ENCODE measurements at regions of chr1 and their contacts with region 1.

Region 1: GRCh38 chr1:42576935-42577334 is 81.3 kb upstream of the PPIH start:
- DNase-seq: no peak
- ATAC-seq: no peak
- H3K4me3 ChIP-seq: no peak overlapping the region
- H3K4me3 Mint-ChIP-seq: no peak overlapping the region
- H3K27ac ChIP-seq: no peak overlapping the region
- H3K27ac Mint-ChIP-seq: no peak overlapping the region
- H3K4me1 ChIP-seq: no peaks in the 10 kb centered on the region
- H3K4me1 Mint-ChIP-seq: no peaks in the 10 kb centered on the region
- H3K27me3 ChIP-seq: no peaks in the 10 kb centered on the region
- H3K27me3 Mint-ChIP-seq: no peaks in the 10 kb centered on the region
- CTCF ChIP-seq: no peak

Region 2: DNA sequence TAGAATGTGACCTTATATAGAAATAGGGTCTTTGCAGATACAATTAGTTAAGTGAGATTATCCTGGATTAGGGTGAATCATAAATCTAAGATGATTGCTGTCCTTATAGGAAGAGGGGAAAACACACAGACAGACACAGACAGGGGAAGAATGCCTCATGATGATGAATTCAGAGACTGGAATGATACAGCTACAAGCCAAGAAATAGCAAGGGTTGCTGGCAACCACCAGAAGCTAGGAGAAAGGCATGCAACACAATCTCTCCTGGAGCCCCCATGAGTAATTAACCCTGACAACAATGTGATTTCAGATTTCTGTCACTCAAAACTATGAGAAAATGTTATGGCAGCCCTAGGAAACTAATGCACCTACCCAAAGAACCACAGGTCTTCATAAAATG is 62.2 kb after region 1 on chr1:
- CTCF ChIA-PET with region 1: no interaction called
- POLR2A ChIA-PET with region 1: no interaction called
- intact Hi-C with region 1: no loop called
- DNase-seq: no peak
- ATAC-seq: no peak
- H3K4me3 ChIP-seq: no peak overlapping the region
- H3K4me3 Mint-ChIP-seq: no peak overlapping the region
- H3K27ac ChIP-seq: no peak overlapping the region
- H3K27ac Mint-ChIP-seq: no peak overlapping the region
- H3K4me1 ChIP-seq: no peaks in the 10 kb centered on the region
- H3K4me1 Mint-ChIP-seq: no peaks in the 10 kb centered on the region
- H3K27me3 ChIP-seq: no peaks in the 10 kb centered on the region
- H3K27me3 Mint-ChIP-seq: no peaks in the 10 kb centered on the region
- CTCF ChIP-seq: no peak

Region 3: GRCh38 chr1:42690477-42691156 is 113.7 kb after region 1 on chr1:
- CTCF ChIA-PET with region 1: interaction called, 3 read pairs
- POLR2A ChIA-PET with region 1: no interaction called
- intact Hi-C with region 1: loop called (anchors 2 kb)
- DNase-seq: no peak
- ATAC-seq: no peak
- H3K4me3 ChIP-seq: no peak overlapping the region
- H3K4me3 Mint-ChIP-seq: peak overlapping the region; percentile 4
- H3K27ac ChIP-seq: no peak overlapping the region
- H3K27ac Mint-ChIP-seq: no peak overlapping the region
- H3K4me1 ChIP-seq: peaks cover 59% of the 10 kb centered on the region in 2 donors
- H3K4me1 Mint-ChIP-seq: peaks cover 76% of the 10 kb centered on the region
- H3K27me3 ChIP-seq: no peaks in the 10 kb centered on the region
- H3K27me3 Mint-ChIP-seq: no peaks in the 10 kb centered on the region
- CTCF ChIP-seq: peak; percentile 33

Region 4: GRCh38 chr1:42747125-42747524 is 170.2 kb after region 1 on chr1:
- CTCF ChIA-PET with region 1: interaction called, 57 read pairs
- POLR2A ChIA-PET with region 1: no interaction called
- intact Hi-C with region 1: loop called (anchors 1 kb)
- DNase-seq: peak; percentile 56
- ATAC-seq: peak; percentile 43
- H3K4me3 ChIP-seq: no peak overlapping the region
- H3K4me3 Mint-ChIP-seq: no peak overlapping the region
- H3K27ac ChIP-seq: no peak overlapping the region
- H3K27ac Mint-ChIP-seq: no peak overlapping the region
- H3K4me1 ChIP-seq: no peaks in the 10 kb centered on the region
- H3K4me1 Mint-ChIP-seq: no peaks in the 10 kb centered on the region
- H3K27me3 ChIP-seq: no peaks in the 10 kb centered on the region
- H3K27me3 Mint-ChIP-seq: no peaks in the 10 kb centered on the region
- CTCF ChIP-seq: peak; percentile 64

Region 5: DNA sequence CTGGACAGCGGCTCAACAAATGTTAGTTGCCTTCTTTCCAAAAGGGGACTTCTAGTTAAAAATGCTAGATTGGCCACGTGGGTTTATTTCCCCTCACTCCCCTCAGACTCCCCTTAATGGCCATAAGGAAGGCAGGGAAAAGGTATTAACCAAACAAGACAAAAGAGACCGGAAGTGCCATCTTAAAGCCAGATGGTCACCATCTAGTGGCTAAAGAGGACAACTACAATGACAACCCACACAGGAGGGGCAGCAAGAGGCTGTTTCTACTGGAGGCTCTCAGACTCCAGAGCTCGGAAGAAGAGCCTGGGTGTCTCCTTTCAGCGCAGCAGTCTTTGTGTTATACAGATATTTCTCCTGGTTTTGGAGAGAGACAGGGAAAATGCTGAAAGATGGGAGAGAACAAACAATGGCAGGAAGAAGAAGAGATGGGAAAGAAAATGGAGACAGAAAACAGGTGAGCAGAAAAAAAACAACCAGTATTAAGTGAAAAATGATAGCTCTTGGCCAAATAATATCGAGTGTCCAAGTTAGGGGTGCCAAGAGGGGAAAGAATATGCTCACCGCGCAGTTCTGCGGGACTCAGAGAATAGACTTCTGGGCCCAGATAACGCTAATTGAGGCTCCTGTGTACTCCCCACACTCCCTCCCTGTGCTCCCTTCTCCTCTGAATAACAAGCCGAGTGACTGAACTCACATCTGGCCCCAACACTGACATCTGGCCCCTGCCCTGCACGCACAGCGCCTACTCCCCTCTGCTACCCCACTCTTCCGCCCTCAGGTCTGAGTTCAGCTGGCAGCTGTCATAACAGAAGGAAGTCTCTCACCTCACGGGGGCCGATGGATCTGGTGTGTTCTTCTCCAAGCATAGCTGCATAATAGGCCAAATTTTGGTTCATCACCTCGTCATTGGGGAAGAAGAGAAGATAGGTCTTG is 180.3 kb after region 1 on chr1:
- CTCF ChIA-PET with region 1: interaction called, 7 read pairs
- POLR2A ChIA-PET with region 1: no interaction called
- intact Hi-C with region 1: loop called (anchors 1 kb)
- DNase-seq: peak; percentile 53
- ATAC-seq: peak; percentile 36
- H3K4me3 ChIP-seq: no peak overlapping the region
- H3K4me3 Mint-ChIP-seq: no peak overlapping the region
- H3K27ac ChIP-seq: no peak overlapping the region
- H3K27ac Mint-ChIP-seq: peak overlapping the region; percentile 66
- H3K4me1 ChIP-seq: peaks cover 15 to 16% of the 10 kb centered on the region in 2 donors
- H3K4me1 Mint-ChIP-seq: peaks cover 12% of the 10 kb centered on the region
- H3K27me3 ChIP-seq: no peaks in the 10 kb centered on the region
- H3K27me3 Mint-ChIP-seq: no peaks in the 10 kb centered on the region
- CTCF ChIP-seq: peak; percentile 69

Region 6: DNA sequence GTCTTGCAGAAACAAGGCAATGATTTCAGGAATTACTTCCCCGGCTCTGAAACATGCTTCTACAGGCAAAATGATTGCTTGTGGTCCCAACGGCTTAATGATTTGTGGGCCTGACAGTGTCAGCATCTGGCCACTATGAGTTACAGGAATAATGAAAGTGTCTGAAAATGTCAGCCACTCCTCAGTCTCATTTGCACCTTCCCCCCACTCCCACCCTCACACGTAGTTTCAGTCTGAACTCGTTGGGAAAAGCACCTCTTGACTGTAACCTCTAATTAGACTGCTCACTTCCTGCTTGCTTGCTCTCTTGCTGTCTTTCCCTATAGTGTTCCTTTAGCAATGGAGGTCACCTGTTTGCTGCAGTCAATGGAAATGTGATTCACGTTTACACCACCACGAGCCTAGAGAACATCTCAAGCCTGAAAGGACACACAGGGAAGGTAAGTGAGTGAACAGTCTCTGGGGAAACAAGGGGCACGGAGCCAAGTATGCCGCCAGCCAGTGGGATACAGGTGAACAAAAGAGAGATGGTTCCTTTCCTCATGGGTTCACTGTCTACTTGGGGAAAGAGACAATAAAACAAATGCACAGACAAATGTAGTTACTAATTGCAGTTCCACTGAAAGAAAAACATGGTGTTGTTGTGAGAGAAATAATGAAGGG is 622.3 kb after region 1 on chr1:
- CTCF ChIA-PET with region 1: no interaction called
- POLR2A ChIA-PET with region 1: no interaction called
- intact Hi-C with region 1: no loop called
- DNase-seq: no peak
- ATAC-seq: no peak
- H3K4me3 ChIP-seq: no peak overlapping the region
- H3K4me3 Mint-ChIP-seq: no peak overlapping the region
- H3K27ac ChIP-seq: no peak overlapping the region
- H3K27ac Mint-ChIP-seq: no peak overlapping the region
- H3K4me1 ChIP-seq: no peaks in the 10 kb centered on the region
- H3K4me1 Mint-ChIP-seq: no peaks in the 10 kb centered on the region
- H3K27me3 ChIP-seq: no peaks in the 10 kb centered on the region
- H3K27me3 Mint-ChIP-seq: peaks cover 14% of the 10 kb centered on the region
- CTCF ChIP-seq: no peak